WTC11 (cell line): ENCODE measurements at regions of chr14 and their contacts with region 1.

Region 1: GRCh38 chr14:103520657-103521437 is 1.8 kb downstream of the CKB start:
- DNase-seq: peak; percentile 79
- ATAC-seq: peak; percentile 8
- H3K4me3 Mint-ChIP-seq: peak overlapping the region; percentile 54
- H3K27ac Mint-ChIP-seq: no peak overlapping the region
- H3K4me1 Mint-ChIP-seq: peaks cover 22% of the 10 kb centered on the region
- H3K27me3 Mint-ChIP-seq: peaks cover 27% of the 10 kb centered on the region
- CTCF ChIP-seq: peak; percentile 35; the same call in 1 of the 2 replicates

Region 2: GRCh38 chr14:103304706-103305105 is 216.1 kb before region 1 on chr14:
- CTCF ChIA-PET with region 1: no interaction called
- POLR2A ChIA-PET with region 1: no interaction called
- DNase-seq: no peak
- ATAC-seq: no peak
- H3K4me3 Mint-ChIP-seq: no peak overlapping the region
- H3K27ac Mint-ChIP-seq: no peak overlapping the region
- H3K4me1 Mint-ChIP-seq: no peaks in the 10 kb centered on the region
- H3K27me3 Mint-ChIP-seq: no peaks in the 10 kb centered on the region; the same call in none of the 2 replicates
- CTCF ChIP-seq: no peak

Region 3: GRCh38 chr14:103500148-103500990 is 20.5 kb before region 1 on chr14:
- CTCF ChIA-PET with region 1: interaction called, 42 read pairs
- POLR2A ChIA-PET with region 1: no interaction called
- DNase-seq: peak; percentile 92
- ATAC-seq: peak; percentile 96
- H3K4me3 Mint-ChIP-seq: no peak overlapping the region
- H3K27ac Mint-ChIP-seq: peak overlapping the region; percentile 91
- H3K4me1 Mint-ChIP-seq: peaks cover 2% of the 10 kb centered on the region; the same call in 1 of the 2 replicates
- H3K27me3 Mint-ChIP-seq: no peaks in the 10 kb centered on the region
- CTCF ChIP-seq: peak; percentile 90

Region 4: DNA sequence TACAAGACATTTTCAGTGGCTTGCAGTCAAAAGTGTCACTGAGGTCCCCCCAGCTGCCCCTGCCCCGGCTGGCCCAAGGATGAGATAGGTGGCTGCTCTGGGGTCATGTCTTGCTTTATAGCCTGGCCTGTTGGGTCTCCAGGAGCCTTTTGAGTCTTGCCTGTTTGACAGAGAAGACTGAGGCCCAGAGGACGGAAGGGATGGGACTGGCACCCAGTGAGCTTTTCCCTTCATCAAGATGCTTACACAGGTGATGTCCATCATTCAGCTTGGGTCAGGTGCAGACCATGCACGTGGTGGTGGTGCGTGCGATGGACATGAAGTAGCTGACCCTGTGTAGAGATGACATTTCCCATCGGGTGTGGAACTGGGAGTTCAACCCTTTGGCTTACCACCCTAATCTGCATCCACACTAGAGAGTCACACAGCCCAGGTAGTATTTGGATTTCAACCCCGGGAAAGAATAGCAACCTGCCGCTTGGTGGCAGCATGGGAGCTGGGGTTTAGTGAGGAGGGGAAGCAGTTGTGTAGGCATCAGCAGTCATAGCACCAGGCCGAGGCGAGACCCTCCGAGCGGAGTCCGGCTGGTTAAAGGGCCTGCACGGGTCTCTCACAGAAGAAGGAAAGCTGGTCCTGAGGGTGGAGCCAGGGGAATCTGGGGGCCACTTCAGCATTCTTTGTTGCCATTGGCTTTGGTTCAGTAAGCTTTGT is 10.4 kb before region 1 on chr14:
- CTCF ChIA-PET with region 1: interaction called, 42 read pairs
- POLR2A ChIA-PET with region 1: no interaction called
- DNase-seq: peak; percentile 37
- ATAC-seq: peak; percentile 57
- H3K4me3 Mint-ChIP-seq: no peak overlapping the region
- H3K27ac Mint-ChIP-seq: no peak overlapping the region
- H3K4me1 Mint-ChIP-seq: no peaks in the 10 kb centered on the region
- H3K27me3 Mint-ChIP-seq: no peaks in the 10 kb centered on the region
- CTCF ChIP-seq: no peak

Region 5: GRCh38 chr14:103546652-103547454 is 26.0 kb after region 1 on chr14:
- CTCF ChIA-PET with region 1: interaction called, 455 read pairs
- POLR2A ChIA-PET with region 1: interaction called, 65 read pairs
- DNase-seq: peak; percentile 94
- ATAC-seq: peak; percentile 67
- H3K4me3 Mint-ChIP-seq: no peak overlapping the region
- H3K27ac Mint-ChIP-seq: no peak overlapping the region
- H3K4me1 Mint-ChIP-seq: peaks cover 7% of the 10 kb centered on the region
- H3K27me3 Mint-ChIP-seq: no peaks in the 10 kb centered on the region
- CTCF ChIP-seq: peak; percentile 84

Region 6: GRCh38 chr14:103562429-103563225 is 41.8 kb after region 1 on chr14 and contains the starts of genes BAG5 and COA8:
- CTCF ChIA-PET with region 1: interaction called, 14 read pairs
- POLR2A ChIA-PET with region 1: interaction called, 9 read pairs
- DNase-seq: peak; percentile 87
- ATAC-seq: peak; percentile 79
- H3K4me3 Mint-ChIP-seq: peak within 1 kb of the TSS; percentile 98
- H3K27ac Mint-ChIP-seq: peak within 1 kb of the TSS; percentile 95
- H3K4me1 Mint-ChIP-seq: peaks cover 27% of the 10 kb centered on the region
- H3K27me3 Mint-ChIP-seq: no peaks in the 10 kb centered on the region
- CTCF ChIP-seq: no peak
- total RNA-seq, gene BAG5: 23.9 to 29.2 TPM (median 24.8 TPM) in 3 replicates
- total RNA-seq, gene COA8: 34.7 to 36.7 TPM (median 36.4 TPM) in 3 replicates

Region 7: DNA sequence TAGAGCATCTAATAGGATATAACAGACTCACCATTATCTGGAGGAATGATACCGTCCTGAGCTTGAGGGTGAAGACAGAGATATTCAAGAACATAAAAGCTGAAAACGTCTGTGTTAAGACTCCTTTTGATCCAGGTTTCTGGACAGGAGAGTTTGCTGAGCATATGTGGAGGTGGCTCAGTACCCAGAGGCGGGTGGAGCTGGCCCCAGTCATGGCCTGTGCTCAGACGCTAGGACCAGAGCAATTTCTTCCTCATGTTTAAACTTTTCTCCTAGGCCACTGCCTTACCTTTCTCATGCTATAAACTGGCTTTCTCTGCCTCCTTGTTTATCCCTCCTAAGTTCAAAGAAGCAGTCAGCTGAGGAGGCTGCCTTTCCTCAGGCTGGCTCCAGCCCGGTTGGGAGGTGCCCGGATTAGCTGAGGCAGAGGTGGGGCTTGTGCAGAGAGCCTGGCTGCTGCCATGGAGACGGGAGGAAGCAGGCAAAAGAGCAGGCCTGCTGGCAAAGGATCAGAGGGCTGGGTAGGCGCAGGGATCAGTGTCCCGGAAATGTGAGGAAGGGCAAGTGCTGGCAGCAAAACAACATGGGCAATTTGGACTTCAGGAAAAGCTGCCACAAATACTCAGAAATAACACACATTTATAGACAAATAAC is 55.7 kb after region 1 on chr14:
- CTCF ChIA-PET with region 1: interaction called, 11 read pairs
- POLR2A ChIA-PET with region 1: no interaction called
- DNase-seq: peak; percentile 36
- ATAC-seq: peak; percentile 88
- H3K4me3 Mint-ChIP-seq: no peak overlapping the region
- H3K27ac Mint-ChIP-seq: peak overlapping the region; percentile 78; the same call in 1 of the 2 replicates
- H3K4me1 Mint-ChIP-seq: no peaks in the 10 kb centered on the region
- H3K27me3 Mint-ChIP-seq: no peaks in the 10 kb centered on the region
- CTCF ChIP-seq: no peak